ENCODE measurements at regions of chr1 and their contacts with region 1.

Region 1: DNA sequence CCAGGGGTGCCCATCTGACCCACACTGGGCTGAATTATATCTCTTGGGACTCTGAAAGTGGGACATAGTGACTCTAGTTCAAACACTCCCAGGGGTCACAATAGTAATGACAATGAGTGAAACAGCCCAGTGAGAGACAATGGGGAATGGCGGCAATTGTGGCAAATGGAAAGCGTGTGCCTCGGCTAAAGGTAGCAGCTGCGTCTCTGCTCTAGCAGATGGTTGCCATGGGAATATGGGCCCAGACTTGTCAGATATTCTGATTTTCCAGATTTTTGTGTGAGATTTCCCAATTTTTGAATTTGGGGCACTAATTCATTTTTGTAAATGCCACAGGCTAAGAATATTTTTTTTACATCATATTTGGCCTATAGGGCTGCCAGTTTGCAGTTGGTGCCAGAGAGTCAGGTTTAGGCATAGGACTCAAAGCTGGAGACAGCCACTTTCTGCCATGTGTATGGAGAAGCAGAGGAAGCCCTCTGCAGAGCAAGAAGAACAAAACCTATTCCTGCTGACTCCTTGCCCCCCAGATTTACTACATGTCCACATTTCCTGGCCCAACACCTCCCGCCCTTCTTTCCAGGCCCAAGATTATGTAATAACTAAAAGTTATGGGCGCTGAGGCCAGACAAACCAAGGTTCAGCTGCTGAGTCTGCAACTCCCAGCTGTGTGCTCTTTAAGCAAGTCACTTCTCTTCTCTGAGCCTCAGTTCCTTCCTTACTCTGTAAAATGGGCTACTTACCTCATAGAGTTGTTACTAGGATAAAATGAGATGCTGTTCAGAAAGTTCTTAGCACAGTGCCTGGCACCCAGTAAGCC is 21.6 kb upstream of the PTP4A2 start:
- DNase-seq: no peak
- H3K4me3 ChIP-seq: no peak overlapping the region
- H3K27ac ChIP-seq: no peak overlapping the region
- H3K27me3 ChIP-seq: no peaks in the 10 kb centered on the region
- CTCF ChIP-seq: no peak

Region 2: GRCh38 chr1:31658721-31659120 is 301.0 kb before region 1 on chr1:
- intact Hi-C with region 1: loop called (anchors 10 kb)
- DNase-seq: no peak
- H3K4me3 ChIP-seq: no peak overlapping the region
- H3K27ac ChIP-seq: no peak overlapping the region
- H3K27me3 ChIP-seq: no peaks in the 10 kb centered on the region
- CTCF ChIP-seq: no peak

Region 3: GRCh38 chr1:31715087-31715872 is 244.5 kb before region 1 on chr1:
- intact Hi-C with region 1: loop called in 1 of 2 experiments (anchors 2 kb)
- DNase-seq: peak; percentile 66 to 96 (median 77)
- H3K4me3 ChIP-seq: peak overlapping the region; percentile 34 to 71 (median 55)
- H3K27ac ChIP-seq: peak overlapping the region in 58 of 59 donors; percentile 6 to 94 (median 81)
- H3K27me3 ChIP-seq: no peaks in the 10 kb centered on the region
- CTCF ChIP-seq: peak; percentile 57 to 95 (median 84)

Region 4: GRCh38 chr1:31789259-31790065 is 170.3 kb before region 1 on chr1:
- intact Hi-C with region 1: loop called in 1 of 2 experiments (anchors 10 kb)
- DNase-seq: peak; percentile 94 to 99 (median 95)
- H3K4me3 ChIP-seq: peak overlapping the region; percentile 57 to 91 (median 77)
- H3K27ac ChIP-seq: peak overlapping the region; percentile 14 to 99 (median 96)
- H3K27me3 ChIP-seq: no peaks in the 10 kb centered on the region
- CTCF ChIP-seq: peak; percentile 61 to 96 (median 89)

Region 5: GRCh38 chr1:32063261-32063681 is 103.5 kb after region 1 on chr1:
- intact Hi-C with region 1: loop called in 1 of 2 experiments (anchors 2 kb)
- DNase-seq: no peak
- H3K4me3 ChIP-seq: no peak overlapping the region
- H3K27ac ChIP-seq: peak overlapping the region in 58 of 59 donors; percentile 21 to 87 (median 74)
- H3K27me3 ChIP-seq: no peaks in the 10 kb centered on the region
- CTCF ChIP-seq: peak; percentile 50 to 87 (median 73)

Measured in dorsolateral prefrontal cortex (tissue), 120 donors.